H1 (cell line): ENCODE measurements at regions of chr4 and their contacts with region 1.

Region 1: DNA sequence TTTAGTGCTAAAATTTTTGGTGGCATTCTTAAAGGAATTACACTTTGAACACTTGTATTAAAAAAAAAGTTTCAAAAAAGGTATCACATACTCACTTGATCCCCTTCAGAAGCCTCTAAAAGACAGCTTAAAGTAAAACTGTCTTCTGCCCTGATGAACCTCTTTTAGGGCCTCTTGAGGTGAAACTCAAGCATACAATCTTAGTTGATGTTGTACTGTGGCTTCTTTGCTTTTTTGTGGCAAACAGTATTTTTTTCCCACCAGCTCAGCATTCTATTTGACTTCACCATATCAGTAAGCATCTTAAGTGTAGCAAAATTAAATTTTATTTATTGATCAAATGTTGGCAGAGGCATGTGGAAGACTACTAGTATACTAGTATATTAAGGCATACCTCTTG is 13.7 kb downstream of the SEC24B start:
- DNase-seq: no peak
- H3K4me3 ChIP-seq: no peak overlapping the region
- H3K27ac ChIP-seq: no peak overlapping the region
- H3K4me1 ChIP-seq: peaks cover 0 to 4% (median 0%) of the 10 kb centered on the region in 4 experiments; a peak in 2 of 7 replicates
- H3K27me3 ChIP-seq: no peaks in the 10 kb centered on the region
- CTCF ChIP-seq: no peak
- EP300 ChIP-seq: no peak
- POLR2A ChIP-seq: no peak
- RAD21 ChIP-seq: no peak

Region 2: GRCh38 chr4:109195646-109196045 is 251.6 kb before region 1 on chr4:
- CTCF ChIA-PET with region 1: no interaction called
- POLR2A ChIA-PET with region 1: no interaction called
- DNase-seq: no peak
- H3K4me3 ChIP-seq: no peak overlapping the region
- H3K27ac ChIP-seq: no peak overlapping the region
- H3K4me1 ChIP-seq: no peaks in the 10 kb centered on the region
- H3K27me3 ChIP-seq: no peaks in the 10 kb centered on the region
- CTCF ChIP-seq: no peak
- EP300 ChIP-seq: no peak
- POLR2A ChIP-seq: no peak
- RAD21 ChIP-seq: no peak

Region 3: GRCh38 chr4:109278594-109279031 is 168.7 kb before region 1 on chr4:
- CTCF ChIA-PET with region 1: no interaction called
- POLR2A ChIA-PET with region 1: no interaction called
- DNase-seq: no peak
- H3K4me3 ChIP-seq: no peak overlapping the region
- H3K27ac ChIP-seq: no peak overlapping the region
- H3K4me1 ChIP-seq: no peaks in the 10 kb centered on the region
- H3K27me3 ChIP-seq: no peaks in the 10 kb centered on the region
- CTCF ChIP-seq: no peak
- EP300 ChIP-seq: no peak
- POLR2A ChIP-seq: no peak
- RAD21 ChIP-seq: no peak

Region 4: DNA sequence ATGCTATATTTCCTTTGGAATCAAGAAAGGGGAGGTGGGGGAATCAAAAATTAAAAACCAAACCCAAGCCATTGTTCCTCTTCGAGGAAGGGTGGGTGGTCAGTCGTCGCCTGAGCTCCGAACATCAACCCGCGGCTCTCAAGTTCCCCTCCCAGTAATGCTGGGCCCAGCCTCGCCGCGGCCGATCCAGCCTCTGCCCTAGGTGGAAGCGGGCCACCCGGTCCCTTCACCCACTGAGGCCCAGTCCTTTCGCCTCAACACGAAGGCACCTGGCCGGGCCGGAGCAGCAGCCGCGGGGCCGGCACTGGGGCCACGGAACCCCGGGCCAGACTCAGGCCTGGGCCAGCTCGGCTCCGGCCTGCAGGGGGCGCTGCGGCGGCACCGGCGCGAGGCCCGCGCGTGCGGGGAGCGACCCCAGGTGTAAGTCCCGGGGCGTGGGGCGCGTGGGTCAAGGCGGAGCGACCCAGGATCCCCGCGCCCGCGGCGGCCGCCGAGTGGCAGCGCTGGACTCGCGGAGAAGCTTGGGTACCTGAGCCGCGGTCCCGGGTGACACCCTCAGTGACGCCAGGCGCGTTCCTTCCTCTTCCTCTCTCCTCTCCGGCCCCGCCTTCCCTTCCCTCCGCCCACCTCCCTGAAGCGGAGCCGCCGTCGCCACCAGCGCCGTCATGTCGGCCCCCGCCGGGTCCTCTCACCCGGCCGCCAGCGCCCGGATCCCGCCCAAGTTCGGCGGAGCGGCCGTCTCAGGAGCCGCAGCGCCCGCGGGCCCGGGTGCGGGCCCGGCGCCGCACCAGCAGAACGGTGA is 13.9 kb before region 1 on chr4 and contains the start of gene SEC24B:
- CTCF ChIA-PET with region 1: interaction called, 12 read pairs
- POLR2A ChIA-PET with region 1: interaction called, 8 read pairs
- DNase-seq: peak in 1 of 2 experiments; percentile 94
- H3K4me3 ChIP-seq: peak within 1 kb of the TSS; percentile 66 to 80 (median 78)
- H3K27ac ChIP-seq: peak within 1 kb of the TSS; percentile 80
- H3K4me1 ChIP-seq: peaks cover 2 to 10% (median 7%) of the 10 kb centered on the region in 4 experiments; a peak in 4 of 7 replicates
- H3K27me3 ChIP-seq: no peaks in the 10 kb centered on the region
- CTCF ChIP-seq: peak; percentile 84 to 90 (median 88)
- EP300 ChIP-seq: 0 out of 3 replicates have a peak, but pooled peaks of 1 of the 2 experiments have one; percentile 11
- POLR2A ChIP-seq: peak; percentile 22 to 90
- RAD21 ChIP-seq: peak; percentile 41 to 75
- total RNA-seq, gene SEC24B: 24.2 and 25.6 TPM in 2 replicates